ENCODE measurements at regions of chr17 and their contacts with region 1.

Region 1: GRCh38 chr17:83079352-83079747 is at the start of gene METRNL:
- DNase-seq: peak in 8 of 9 experiments; percentile 44 to 78 (median 60)
- ATAC-seq: peak; percentile 13
- H3K4me3 ChIP-seq: peak within 1 kb of the TSS; percentile 34 to 54
- H3K4me3 Mint-ChIP-seq: peak within 1 kb of the TSS; percentile 65
- H3K27ac ChIP-seq: no peak within 1 kb of the TSS
- H3K27ac Mint-ChIP-seq: no peak within 1 kb of the TSS
- H3K4me1 ChIP-seq: peaks cover 40% of the 10 kb centered on the region
- H3K4me1 Mint-ChIP-seq: peaks cover 29% of the 10 kb centered on the region
- H3K27me3 ChIP-seq: peaks cover 0 to 2% of the 10 kb centered on the region in 2 experiments
- H3K27me3 Mint-ChIP-seq: peaks cover 8% of the 10 kb centered on the region
- CTCF ChIP-seq: no peak
- total RNA-seq, gene METRNL: 153 to 158 TPM

Region 2: GRCh38 chr17:82881900-82882714 is 197.2 kb before region 1 on chr17:
- CTCF ChIA-PET with region 1: no interaction called
- POLR2A ChIA-PET with region 1: no interaction called
- intact Hi-C with region 1: loop called in 1 of 2 experiments (anchors 2 kb)
- DNase-seq: no peak
- ATAC-seq: no peak
- H3K4me3 ChIP-seq: peak overlapping the region; percentile 14 to 70
- H3K4me3 Mint-ChIP-seq: peak overlapping the region; percentile 82
- H3K27ac ChIP-seq: peak overlapping the region; percentile 74
- H3K27ac Mint-ChIP-seq: peak overlapping the region; percentile 99
- H3K4me1 ChIP-seq: peaks cover 63% of the 10 kb centered on the region
- H3K4me1 Mint-ChIP-seq: peaks cover 71% of the 10 kb centered on the region
- H3K27me3 ChIP-seq: no peaks in the 10 kb centered on the region
- H3K27me3 Mint-ChIP-seq: no peaks in the 10 kb centered on the region
- CTCF ChIP-seq: no peak

Region 3: GRCh38 chr17:82985973-82986372 is 93.4 kb before region 1 on chr17:
- CTCF ChIA-PET with region 1: no interaction called
- POLR2A ChIA-PET with region 1: interaction called, 3 read pairs
- intact Hi-C with region 1: loop called in 1 of 2 experiments (anchors 2 kb)
- DNase-seq: peak; percentile 54 to 85 (median 76)
- ATAC-seq: peak; percentile 83
- H3K4me3 ChIP-seq: peak overlapping the region; percentile 16 to 26
- H3K4me3 Mint-ChIP-seq: peak overlapping the region; percentile 74
- H3K27ac ChIP-seq: peak overlapping the region; percentile 14 to 47
- H3K27ac Mint-ChIP-seq: peak overlapping the region; percentile 89
- H3K4me1 ChIP-seq: peaks cover 30% of the 10 kb centered on the region
- H3K4me1 Mint-ChIP-seq: peaks cover 53% of the 10 kb centered on the region
- H3K27me3 ChIP-seq: no peaks in the 10 kb centered on the region
- H3K27me3 Mint-ChIP-seq: no peaks in the 10 kb centered on the region
- CTCF ChIP-seq: no peak

Region 4: GRCh38 chr17:83051395-83052233 is 27.7 kb before region 1 on chr17:
- CTCF ChIA-PET with region 1: no interaction called
- POLR2A ChIA-PET with region 1: interaction called, 4 read pairs
- intact Hi-C with region 1: loop called (anchors 1 kb)
- DNase-seq: peak; percentile 95 to 99 (median 99)
- ATAC-seq: peak; percentile 85
- H3K4me3 ChIP-seq: peak overlapping the region; percentile 49 to 68
- H3K4me3 Mint-ChIP-seq: peak overlapping the region; percentile 86
- H3K27ac ChIP-seq: peak overlapping the region; percentile 75 to 87
- H3K27ac Mint-ChIP-seq: peak overlapping the region; percentile 94
- H3K4me1 ChIP-seq: peaks cover 40% of the 10 kb centered on the region
- H3K4me1 Mint-ChIP-seq: peaks cover 40% of the 10 kb centered on the region
- H3K27me3 ChIP-seq: no peaks in the 10 kb centered on the region
- H3K27me3 Mint-ChIP-seq: no peaks in the 10 kb centered on the region
- CTCF ChIP-seq: no peak

Region 5: DNA sequence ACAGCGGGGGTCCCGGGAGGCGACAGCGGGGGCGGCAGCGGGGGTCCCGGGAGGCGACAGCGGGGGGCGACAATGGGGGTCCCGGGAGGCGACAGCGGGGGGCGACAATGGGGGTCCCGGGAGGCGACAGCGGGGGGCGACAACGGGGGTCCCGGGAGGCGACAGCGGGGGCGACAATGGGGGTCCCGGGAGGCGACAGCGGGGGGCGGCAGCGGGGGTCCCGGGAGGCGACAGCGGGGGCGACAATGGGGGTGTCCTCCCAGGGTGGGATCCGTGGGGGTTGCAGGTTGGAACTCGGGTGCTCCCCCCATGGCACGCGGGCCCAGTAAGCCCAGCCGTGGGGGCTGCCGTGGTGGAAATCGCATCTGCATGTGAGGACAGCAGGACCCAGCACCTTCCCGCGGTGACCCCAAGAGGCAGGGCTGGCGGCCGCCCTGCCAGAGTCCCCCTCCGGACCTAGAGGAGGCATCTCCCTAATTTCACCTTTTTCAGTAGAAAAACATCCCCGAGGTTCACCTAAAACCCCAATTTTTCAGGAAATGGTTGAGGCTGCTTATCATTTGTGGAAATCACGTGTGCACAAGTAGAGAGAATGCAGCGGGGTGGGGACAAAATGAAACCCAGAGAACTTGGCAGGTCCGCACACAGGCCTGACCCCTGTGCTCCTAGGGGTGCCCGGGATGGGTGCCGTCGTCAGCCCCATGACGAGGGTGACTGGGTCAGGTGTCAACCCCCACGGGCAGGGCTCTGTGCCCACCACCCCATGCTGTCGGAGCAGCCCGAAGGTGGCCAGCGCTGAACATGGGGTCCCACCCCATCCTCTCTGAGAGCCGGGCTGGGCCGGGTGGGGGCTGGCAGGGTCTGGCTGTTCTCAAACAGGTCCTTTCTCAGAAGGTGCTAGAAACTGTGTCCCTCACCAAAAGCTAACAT is 10.4 kb before region 1 on chr17:
- CTCF ChIA-PET with region 1: no interaction called
- POLR2A ChIA-PET with region 1: no interaction called
- intact Hi-C with region 1: loop called in 1 of 2 experiments (anchors 1 kb)
- DNase-seq: peak in 2 of 9 experiments; percentile 13 to 48
- ATAC-seq: peak; percentile 17
- H3K4me3 ChIP-seq: no peak overlapping the region
- H3K4me3 Mint-ChIP-seq: peak overlapping the region; percentile 42
- H3K27ac ChIP-seq: no peak overlapping the region
- H3K27ac Mint-ChIP-seq: no peak overlapping the region
- H3K4me1 ChIP-seq: peaks cover 34% of the 10 kb centered on the region
- H3K4me1 Mint-ChIP-seq: peaks cover 31% of the 10 kb centered on the region
- H3K27me3 ChIP-seq: peaks cover 0 to 2% of the 10 kb centered on the region in 2 experiments
- H3K27me3 Mint-ChIP-seq: no peaks in the 10 kb centered on the region
- CTCF ChIP-seq: no peak

Region 6: GRCh38 chr17:83125511-83126274 is 46.3 kb after region 1 on chr17:
- CTCF ChIA-PET with region 1: interaction called, 3 read pairs
- POLR2A ChIA-PET with region 1: no interaction called
- intact Hi-C with region 1: loop called in 1 of 2 experiments (anchors 2 kb)
- DNase-seq: peak in 4 of 9 experiments; percentile 36 to 82 (median 76)
- ATAC-seq: peak; percentile 82
- H3K4me3 ChIP-seq: no peak overlapping the region
- H3K4me3 Mint-ChIP-seq: peak overlapping the region; percentile 39
- H3K27ac ChIP-seq: peak overlapping the region in 1 of 2 experiments; percentile 47
- H3K27ac Mint-ChIP-seq: peak overlapping the region; percentile 92
- H3K4me1 ChIP-seq: peaks cover 21% of the 10 kb centered on the region
- H3K4me1 Mint-ChIP-seq: peaks cover 20% of the 10 kb centered on the region
- H3K27me3 ChIP-seq: peaks cover 0 to 7% of the 10 kb centered on the region in 2 experiments
- H3K27me3 Mint-ChIP-seq: peaks cover 25% of the 10 kb centered on the region
- CTCF ChIP-seq: no peak